ENCODE measurements at regions of chr14 and their contacts with region 1.

Region 1: DNA sequence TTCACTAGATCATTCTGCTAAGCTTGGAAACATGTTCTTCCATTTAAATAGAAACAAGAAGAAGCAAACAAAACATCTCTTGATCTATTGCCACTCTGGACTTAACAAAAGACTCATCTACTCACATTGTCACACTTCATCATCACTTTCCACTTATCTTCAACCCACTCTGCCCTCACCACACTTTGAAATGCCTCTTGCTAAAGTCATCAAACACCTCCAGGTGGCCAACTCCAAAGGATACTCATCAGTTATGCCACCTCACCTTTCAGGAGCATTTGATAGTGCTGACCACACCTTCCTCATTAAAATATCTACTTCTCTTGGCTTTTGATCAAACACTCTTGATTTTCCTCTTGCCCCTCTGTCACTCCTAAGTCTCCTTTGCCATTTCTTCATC is 7.2 kb downstream of the EFCAB11 start:
- DNase-seq: no peak
- ATAC-seq: no peak
- H3K4me3 ChIP-seq: no peak overlapping the region
- H3K4me3 Mint-ChIP-seq: no peak overlapping the region
- H3K27ac ChIP-seq: no peak overlapping the region
- H3K27ac Mint-ChIP-seq: no peak overlapping the region
- H3K4me1 ChIP-seq: no peaks in the 10 kb centered on the region
- H3K4me1 Mint-ChIP-seq: no peaks in the 10 kb centered on the region
- H3K27me3 ChIP-seq: no peaks in the 10 kb centered on the region
- H3K27me3 Mint-ChIP-seq: no peaks in the 10 kb centered on the region
- CTCF ChIP-seq: no peak

Region 2: DNA sequence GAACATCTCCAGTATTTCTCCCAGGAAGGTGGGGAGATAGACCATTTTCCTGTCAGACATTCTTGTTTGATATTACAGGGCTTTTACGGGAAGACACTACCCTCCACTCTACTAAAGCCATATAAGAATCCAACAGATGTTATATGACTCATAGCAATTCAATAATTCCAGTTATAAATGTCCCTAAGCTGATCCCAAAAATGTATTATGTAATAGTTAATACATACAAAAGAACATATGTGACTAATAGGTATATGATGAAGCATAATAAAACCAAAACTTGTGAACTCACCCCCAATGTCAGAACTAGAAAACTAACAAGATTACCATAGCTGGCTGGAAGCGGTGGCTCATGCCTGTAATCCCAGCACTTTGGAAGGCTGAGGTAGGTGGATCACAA is 77.0 kb before region 1 on chr14:
- CTCF ChIA-PET with region 1: no interaction called
- POLR2A ChIA-PET with region 1: no interaction called
- intact Hi-C with region 1: no loop called
- DNase-seq: no peak
- ATAC-seq: no peak
- H3K4me3 ChIP-seq: no peak overlapping the region
- H3K4me3 Mint-ChIP-seq: no peak overlapping the region
- H3K27ac ChIP-seq: no peak overlapping the region
- H3K27ac Mint-ChIP-seq: no peak overlapping the region
- H3K4me1 ChIP-seq: no peaks in the 10 kb centered on the region
- H3K4me1 Mint-ChIP-seq: no peaks in the 10 kb centered on the region
- H3K27me3 ChIP-seq: no peaks in the 10 kb centered on the region
- H3K27me3 Mint-ChIP-seq: no peaks in the 10 kb centered on the region
- CTCF ChIP-seq: no peak

Region 3: GRCh38 chr14:89892953-89893352 is 54.4 kb before region 1 on chr14:
- CTCF ChIA-PET with region 1: no interaction called
- POLR2A ChIA-PET with region 1: no interaction called
- intact Hi-C with region 1: no loop called
- DNase-seq: no peak
- ATAC-seq: no peak
- H3K4me3 ChIP-seq: no peak overlapping the region
- H3K4me3 Mint-ChIP-seq: no peak overlapping the region
- H3K27ac ChIP-seq: no peak overlapping the region
- H3K27ac Mint-ChIP-seq: no peak overlapping the region
- H3K4me1 ChIP-seq: no peaks in the 10 kb centered on the region
- H3K4me1 Mint-ChIP-seq: no peaks in the 10 kb centered on the region
- H3K27me3 ChIP-seq: no peaks in the 10 kb centered on the region
- H3K27me3 Mint-ChIP-seq: no peaks in the 10 kb centered on the region
- CTCF ChIP-seq: no peak

Region 4: DNA sequence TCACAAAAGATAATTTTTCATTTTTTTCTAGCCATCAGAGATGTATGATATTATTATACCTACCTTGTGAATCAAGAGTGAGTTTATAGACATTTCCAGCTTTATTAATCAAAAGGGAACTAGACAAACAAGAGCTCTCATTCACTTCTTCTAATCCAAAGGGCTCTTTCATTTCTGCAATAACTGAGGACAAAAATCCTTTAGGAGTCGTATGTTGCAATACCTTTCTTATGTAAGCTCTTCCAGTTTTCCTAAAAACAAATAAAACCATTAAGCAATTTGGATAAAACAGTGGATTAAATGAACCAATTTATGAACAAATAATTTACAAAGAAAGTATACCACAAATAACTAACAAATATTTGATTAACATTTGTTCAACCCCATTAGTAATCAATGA is 1677.4 kb after region 1 on chr14:
- CTCF ChIA-PET with region 1: no interaction called
- POLR2A ChIA-PET with region 1: no interaction called
- intact Hi-C with region 1: loop called in 1 of 2 experiments (anchors 10 kb)
- DNase-seq: no peak
- ATAC-seq: no peak
- H3K4me3 ChIP-seq: no peak overlapping the region
- H3K4me3 Mint-ChIP-seq: no peak overlapping the region
- H3K27ac ChIP-seq: no peak overlapping the region
- H3K27ac Mint-ChIP-seq: no peak overlapping the region
- H3K4me1 ChIP-seq: no peaks in the 10 kb centered on the region
- H3K4me1 Mint-ChIP-seq: no peaks in the 10 kb centered on the region
- H3K27me3 ChIP-seq: no peaks in the 10 kb centered on the region
- H3K27me3 Mint-ChIP-seq: peaks cover 6% of the 10 kb centered on the region
- CTCF ChIP-seq: no peak

Measured in CD8-positive, alpha-beta T cell (primary cell).